ENCODE measurements at regions of chr5 and their contacts with region 1.

Region 1: GRCh38 chr5:68962757-68963484 is 130.9 kb upstream of the SLC30A5 start:
- DNase-seq: peak; percentile 63
- H3K4me3 ChIP-seq: no peak overlapping the region
- H3K27ac ChIP-seq: peak overlapping the region in 1 of 4 donors; percentile 53
- H3K4me1 ChIP-seq: peaks cover 3 to 21% (median 8%) of the 10 kb centered on the region in 4 donors
- H3K27me3 ChIP-seq: no peaks in the 10 kb centered on the region
- CTCF ChIP-seq: peak; percentile 69 to 83 (median 80)
- EP300 ChIP-seq: no peak
- POLR2A ChIP-seq: no peak

Region 2: GRCh38 chr5:68287976-68288706 is 674.8 kb before region 1 on chr5:
- in situ Hi-C with region 1: loop called (anchors 25 kb)
- intact Hi-C with region 1: no loop called
- DNase-seq: peak; percentile 66
- H3K4me3 ChIP-seq: peak overlapping the region; percentile 24 to 60 (median 40)
- H3K27ac ChIP-seq: peak overlapping the region; percentile 84 to 93 (median 90)
- H3K4me1 ChIP-seq: peaks cover 37 to 89% (median 66%) of the 10 kb centered on the region in 4 donors
- H3K27me3 ChIP-seq: no peaks in the 10 kb centered on the region
- CTCF ChIP-seq: peak in 1 of 5 experiments; percentile 38
- EP300 ChIP-seq: no peak
- POLR2A ChIP-seq: peak; percentile 42

Region 3: GRCh38 chr5:68478301-68479095 is 484.4 kb before region 1 on chr5:
- in situ Hi-C with region 1: loop called in 1 of 4 experiments (anchors 25 kb)
- intact Hi-C with region 1: no loop called
- DNase-seq: no peak
- H3K4me3 ChIP-seq: no peak overlapping the region
- H3K27ac ChIP-seq: peak overlapping the region in 3 of 4 donors; percentile 22 to 69 (median 39)
- H3K4me1 ChIP-seq: peaks cover 4 to 11% (median 5%) of the 10 kb centered on the region in 4 donors
- H3K27me3 ChIP-seq: no peaks in the 10 kb centered on the region
- CTCF ChIP-seq: no peak
- EP300 ChIP-seq: no peak
- POLR2A ChIP-seq: no peak

Region 4: GRCh38 chr5:68661237-68661636 is 301.7 kb before region 1 on chr5:
- in situ Hi-C with region 1: loop called in 1 of 4 experiments (anchors 25 kb)
- intact Hi-C with region 1: no loop called
- DNase-seq: peak; percentile 24
- H3K4me3 ChIP-seq: no peak overlapping the region
- H3K27ac ChIP-seq: no peak overlapping the region
- H3K4me1 ChIP-seq: no peaks in the 10 kb centered on the region
- H3K27me3 ChIP-seq: no peaks in the 10 kb centered on the region
- CTCF ChIP-seq: peak; percentile 28 to 60 (median 49)
- EP300 ChIP-seq: no peak
- POLR2A ChIP-seq: no peak

Region 5: GRCh38 chr5:68875351-68875750 is 87.6 kb before region 1 on chr5:
- in situ Hi-C with region 1: no loop called
- intact Hi-C with region 1: no loop called
- DNase-seq: no peak
- H3K4me3 ChIP-seq: no peak overlapping the region
- H3K27ac ChIP-seq: no peak overlapping the region
- H3K4me1 ChIP-seq: no peaks in the 10 kb centered on the region
- H3K27me3 ChIP-seq: no peaks in the 10 kb centered on the region
- CTCF ChIP-seq: no peak
- EP300 ChIP-seq: no peak
- POLR2A ChIP-seq: no peak

Region 6: GRCh38 chr5:69024241-69024651 is 61.3 kb after region 1 on chr5:
- in situ Hi-C with region 1: no loop called
- intact Hi-C with region 1: no loop called
- DNase-seq: no peak
- H3K4me3 ChIP-seq: no peak overlapping the region
- H3K27ac ChIP-seq: no peak overlapping the region
- H3K4me1 ChIP-seq: no peaks in the 10 kb centered on the region
- H3K27me3 ChIP-seq: no peaks in the 10 kb centered on the region
- CTCF ChIP-seq: peak; percentile 37 to 57 (median 49)
- EP300 ChIP-seq: no peak
- POLR2A ChIP-seq: no peak